ENCODE measurements at regions of chr12 and their contacts with region 1.

Region 1: DNA sequence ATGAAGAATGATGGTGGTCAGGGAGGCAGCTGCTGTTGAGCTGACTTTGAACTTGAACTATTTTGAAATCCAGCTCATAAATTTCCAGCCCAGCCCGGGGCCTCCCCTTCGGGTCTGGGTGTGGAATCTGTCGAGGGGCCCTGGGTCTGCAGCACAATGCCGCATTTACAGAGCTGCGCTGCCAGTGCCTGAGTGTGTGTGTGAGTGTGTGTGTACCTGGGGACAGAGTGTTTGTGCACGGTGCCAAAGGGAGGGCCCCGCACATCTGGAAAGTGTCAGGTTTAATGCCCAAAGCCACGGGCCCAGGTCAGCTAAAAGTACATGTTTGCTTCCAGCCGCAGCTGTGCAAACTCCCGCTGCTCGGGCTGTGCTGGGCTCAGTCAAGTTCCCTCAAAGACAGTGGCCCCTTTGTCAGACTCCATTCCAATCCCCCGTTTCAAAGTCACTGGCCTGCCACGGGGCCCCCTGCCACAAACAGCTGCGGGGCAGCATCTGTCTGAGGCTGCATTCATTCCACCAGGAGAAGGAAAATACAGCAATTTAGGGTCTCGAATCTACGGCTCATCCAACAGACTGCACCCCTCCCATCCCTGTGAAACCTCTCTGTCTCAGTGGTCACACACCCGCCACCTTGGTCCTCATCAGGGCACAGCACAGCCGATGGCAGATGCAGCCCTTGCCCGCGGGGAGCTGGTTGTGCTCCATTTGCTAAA is 16.3 kb upstream of the RFLNA start:
- DNase-seq: peak; percentile 91
- ATAC-seq: peak; percentile 92
- H3K4me3 ChIP-seq: peak overlapping the region in 1 of 3 experiments; percentile 26; a peak in 2 of 6 replicates
- H3K27ac ChIP-seq: no peak overlapping the region
- H3K4me1 ChIP-seq: peaks cover 51% of the 10 kb centered on the region
- H3K27me3 ChIP-seq: peaks cover 0 to 15% of the 10 kb centered on the region in 2 experiments; a peak in 2 of 5 replicates
- CTCF ChIP-seq: no peak; the same call in 1 of the 2 replicates
- EP300 ChIP-seq: peak in 1 of 2 experiments; percentile 76; a peak in 1 of 4 replicates
- POLR2A ChIP-seq: no peak
- RAD21 ChIP-seq: 0 out of 2 replicates have a peak, but pooled peaks have one; percentile 30

Region 2: DNA sequence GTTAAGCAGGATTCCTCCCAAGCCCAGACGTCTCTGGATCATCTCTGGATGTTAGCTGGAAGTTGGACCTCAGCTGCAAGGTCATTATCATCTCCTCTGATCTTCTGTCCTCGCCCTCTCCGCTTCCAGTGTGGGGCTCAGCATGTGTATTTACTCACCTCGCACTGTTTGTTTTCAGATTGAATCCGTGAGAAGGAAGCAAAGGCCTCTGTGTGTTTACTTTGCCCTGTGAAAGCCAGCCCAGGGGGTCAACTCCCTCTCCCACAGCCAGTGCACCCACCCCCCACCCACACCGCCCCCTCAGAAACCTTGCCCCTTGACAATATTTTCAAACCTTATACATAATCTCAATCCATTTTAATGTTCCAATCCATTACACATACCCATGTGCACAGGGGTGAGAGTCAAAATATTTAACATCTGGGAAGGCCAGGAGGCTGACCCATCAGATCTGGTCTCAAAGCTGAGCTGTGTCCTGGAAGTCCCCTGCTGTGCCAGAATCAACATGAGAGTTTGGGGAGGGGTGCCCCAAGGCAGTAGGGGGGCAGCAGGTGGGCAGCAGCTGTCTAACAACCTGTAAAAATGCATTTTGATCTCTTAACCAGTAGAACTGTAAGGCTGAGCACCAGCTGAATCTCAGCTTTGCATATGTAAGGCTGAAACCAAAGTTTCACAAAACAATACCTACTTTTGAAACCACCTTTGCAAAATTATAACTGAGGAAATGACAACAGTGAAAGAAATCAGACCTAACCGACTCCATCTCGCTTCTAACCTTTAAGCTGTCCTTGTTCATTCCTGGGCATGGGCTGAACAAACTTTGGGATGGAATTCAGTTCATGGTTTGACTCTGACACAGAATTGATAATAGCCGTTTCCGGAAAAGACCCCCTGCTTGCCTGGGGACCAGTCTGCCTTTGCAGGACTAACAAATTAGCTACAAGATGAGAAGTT is 147.6 kb before region 1 on chr12:
- CTCF ChIA-PET with region 1: no interaction called
- POLR2A ChIA-PET with region 1: no interaction called
- in situ Hi-C with region 1: no loop called
- intact Hi-C with region 1: loop called (anchors 1 kb)
- DNase-seq: peak; percentile 89
- ATAC-seq: peak; percentile 95
- H3K4me3 ChIP-seq: peak overlapping the region in 2 of 3 experiments; percentile 24 to 36; a peak in 2 of 6 replicates
- H3K27ac ChIP-seq: peak overlapping the region; percentile 56
- H3K4me1 ChIP-seq: peaks cover 52% of the 10 kb centered on the region
- H3K27me3 ChIP-seq: no peaks in the 10 kb centered on the region; a peak in 1 of 5 replicates
- CTCF ChIP-seq: peak; percentile 17; the same call in 1 of the 2 replicates
- EP300 ChIP-seq: peak; percentile 71 to 96; a peak in 3 of 4 replicates
- POLR2A ChIP-seq: no peak
- RAD21 ChIP-seq: no peak

Region 3: GRCh38 chr12:124411281-124411878 is 132.8 kb after region 1 on chr12:
- CTCF ChIA-PET with region 1: no interaction called
- POLR2A ChIA-PET with region 1: no interaction called
- in situ Hi-C with region 1: no loop called
- intact Hi-C with region 1: no loop called
- DNase-seq: no peak
- ATAC-seq: no peak
- H3K4me3 ChIP-seq: no peak overlapping the region
- H3K27ac ChIP-seq: no peak overlapping the region
- H3K4me1 ChIP-seq: no peaks in the 10 kb centered on the region
- H3K27me3 ChIP-seq: no peaks in the 10 kb centered on the region
- CTCF ChIP-seq: no peak
- EP300 ChIP-seq: no peak
- POLR2A ChIP-seq: no peak
- RAD21 ChIP-seq: no peak

Region 4: GRCh38 chr12:124917135-124917840 is 638.7 kb after region 1 on chr12:
- CTCF ChIA-PET with region 1: no interaction called
- POLR2A ChIA-PET with region 1: no interaction called
- in situ Hi-C with region 1: no loop called
- intact Hi-C with region 1: no loop called
- DNase-seq: peak; percentile 99
- ATAC-seq: peak; percentile 81
- H3K4me3 ChIP-seq: peak overlapping the region; percentile 53 to 99 (median 86)
- H3K27ac ChIP-seq: peak overlapping the region; percentile 100
- H3K4me1 ChIP-seq: peaks cover 50% of the 10 kb centered on the region
- H3K27me3 ChIP-seq: no peaks in the 10 kb centered on the region; a peak in 1 of 5 replicates
- CTCF ChIP-seq: no peak
- EP300 ChIP-seq: peak; percentile 92 to 96
- POLR2A ChIP-seq: peak; percentile 54 to 65; a peak in 3 of 4 replicates
- RAD21 ChIP-seq: peak; percentile 9; the same call in 1 of the 2 replicates